Lower lobe of right lung (tissue), 2 donors: ENCODE measurements at regions of chr6 and their contacts with region 1.

Region 1: GRCh38 chr6:32785781-32786533 is 22.6 kb upstream of the HLA-DQB2 start:
- DNase-seq: no peak
- ATAC-seq: peak; percentile 92 to 97
- H3K4me3 ChIP-seq: no peak overlapping the region
- H3K27ac ChIP-seq: no peak overlapping the region
- H3K4me1 ChIP-seq: no peaks in the 10 kb centered on the region
- H3K27me3 ChIP-seq: no peaks in the 10 kb centered on the region
- CTCF ChIP-seq: peak; percentile 65

Region 2: GRCh38 chr6:32413427-32414047 is 372.4 kb before region 1 on chr6:
- intact Hi-C with region 1: loop called (anchors 10 kb)
- DNase-seq: peak; percentile 87
- ATAC-seq: peak; percentile 88 to 93
- H3K4me3 ChIP-seq: no peak overlapping the region
- H3K27ac ChIP-seq: no peak overlapping the region
- H3K4me1 ChIP-seq: peaks cover 5% of the 10 kb centered on the region
- H3K27me3 ChIP-seq: peaks cover 43% of the 10 kb centered on the region
- CTCF ChIP-seq: peak; percentile 96